Common myeloid progenitor, CD34-positive (primary cell): ENCODE measurements at regions of chr17 and their contacts with region 1.

Region 1: GRCh38 chr17:50783193-50783660 is 15.9 kb upstream of the ANKRD40CL start:
- DNase-seq: peak; percentile 85 to 92 (median 90)
- H3K4me3 ChIP-seq: no peak overlapping the region
- H3K27ac ChIP-seq: no peak overlapping the region
- H3K4me1 ChIP-seq: peaks cover 0 to 3% (median 3%) of the 10 kb centered on the region in 4 experiments
- H3K27me3 ChIP-seq: peaks cover 0 to 8% (median 0%) of the 10 kb centered on the region in 5 experiments

Region 2: DNA sequence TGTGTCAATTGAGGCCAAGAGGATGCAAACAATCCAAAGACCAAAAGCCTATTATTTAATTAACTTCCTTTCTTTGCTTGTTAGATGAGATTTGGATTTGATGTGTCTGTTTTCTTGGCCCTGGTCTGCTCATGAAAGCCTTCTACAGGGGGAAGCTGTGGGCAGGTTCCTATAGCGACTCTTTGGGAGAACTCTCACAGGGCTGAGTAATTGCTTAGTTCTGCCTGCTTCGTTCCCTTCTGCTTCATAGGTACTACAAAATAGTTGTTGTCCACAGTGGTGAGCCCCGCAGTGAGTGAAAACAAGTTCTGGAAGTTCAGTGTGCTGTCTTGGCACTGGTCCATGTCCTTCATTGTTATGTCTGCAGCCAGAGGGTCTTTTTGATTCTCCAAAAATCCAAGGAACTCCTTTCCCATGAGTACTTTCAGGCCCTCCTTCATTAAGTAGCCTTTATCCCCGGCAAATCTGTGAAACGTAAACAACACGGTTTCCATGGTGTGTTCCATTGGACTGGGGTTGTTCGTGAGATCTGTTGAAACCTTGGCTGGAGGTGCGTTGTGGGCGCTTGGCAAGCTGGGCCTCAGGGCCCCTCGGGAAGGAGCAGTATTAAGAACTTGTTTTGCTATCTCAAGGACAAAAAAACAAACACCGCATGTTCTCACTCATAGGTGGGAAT is 14.0 kb after region 1 on chr17:
- CTCF ChIA-PET with region 1: interaction called, 16 read pairs
- POLR2A ChIA-PET with region 1: no interaction called
- DNase-seq: peak in 2 of 3 donors; percentile 75
- H3K4me3 ChIP-seq: no peak overlapping the region
- H3K27ac ChIP-seq: no peak overlapping the region
- H3K4me1 ChIP-seq: peaks cover 0 to 14% (median 8%) of the 10 kb centered on the region in 4 experiments
- H3K27me3 ChIP-seq: no peaks in the 10 kb centered on the region

Region 3: DNA sequence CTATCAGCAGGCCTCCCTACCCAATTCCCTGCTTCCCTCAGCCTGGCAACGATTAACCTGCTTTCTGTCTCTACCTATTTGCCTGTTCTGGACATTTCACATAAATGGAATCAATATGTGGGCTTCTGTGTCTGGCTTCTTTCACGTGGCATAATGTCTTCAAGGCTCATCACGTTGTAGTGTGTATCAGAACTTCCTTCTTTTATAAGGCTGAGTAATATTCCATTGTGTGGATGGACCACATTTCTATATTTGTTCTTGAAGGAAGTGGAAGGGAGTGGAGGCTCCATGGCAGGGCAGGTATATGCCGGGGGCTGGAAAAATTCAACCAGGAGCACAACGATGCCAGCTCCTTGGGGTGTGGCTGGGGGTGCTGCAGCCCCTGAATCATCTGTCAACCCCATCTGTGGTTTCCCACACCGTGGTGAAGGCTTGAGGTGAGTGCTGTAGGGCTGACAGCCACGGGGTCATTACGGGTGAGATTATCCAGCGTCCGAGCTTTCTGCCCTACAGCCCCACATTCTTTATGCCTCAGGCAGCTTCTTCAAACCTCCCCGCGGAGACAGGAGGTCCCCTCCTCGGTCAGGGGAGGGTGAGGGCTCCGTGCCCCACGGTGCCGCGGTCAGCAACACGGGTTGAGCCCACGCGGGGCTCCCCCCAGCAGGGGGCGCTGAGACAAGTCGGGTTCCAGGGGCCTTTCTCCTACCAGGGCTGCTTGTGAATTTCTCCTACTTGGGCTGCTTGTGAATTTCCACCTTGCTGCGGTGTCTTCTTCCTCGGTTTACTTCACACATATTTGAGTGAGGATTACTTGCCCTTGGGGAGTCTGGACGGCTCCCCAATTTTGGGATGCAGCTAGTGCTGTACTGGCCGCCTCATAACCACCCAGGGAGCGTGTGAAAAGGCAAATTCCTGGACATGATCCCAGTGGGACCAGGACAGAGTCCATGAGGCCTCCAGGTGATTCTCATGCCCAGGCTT is 33.8 kb after region 1 on chr17:
- CTCF ChIA-PET with region 1: interaction called, 39 read pairs
- POLR2A ChIA-PET with region 1: no interaction called
- DNase-seq: peak; percentile 43 to 61 (median 51)
- H3K4me3 ChIP-seq: peak overlapping the region in 3 of 7 experiments; percentile 33 to 61 (median 44)
- H3K27ac ChIP-seq: no peak overlapping the region
- H3K4me1 ChIP-seq: peaks cover 0 to 11% (median 6%) of the 10 kb centered on the region in 4 experiments
- H3K27me3 ChIP-seq: no peaks in the 10 kb centered on the region

Region 4: DNA sequence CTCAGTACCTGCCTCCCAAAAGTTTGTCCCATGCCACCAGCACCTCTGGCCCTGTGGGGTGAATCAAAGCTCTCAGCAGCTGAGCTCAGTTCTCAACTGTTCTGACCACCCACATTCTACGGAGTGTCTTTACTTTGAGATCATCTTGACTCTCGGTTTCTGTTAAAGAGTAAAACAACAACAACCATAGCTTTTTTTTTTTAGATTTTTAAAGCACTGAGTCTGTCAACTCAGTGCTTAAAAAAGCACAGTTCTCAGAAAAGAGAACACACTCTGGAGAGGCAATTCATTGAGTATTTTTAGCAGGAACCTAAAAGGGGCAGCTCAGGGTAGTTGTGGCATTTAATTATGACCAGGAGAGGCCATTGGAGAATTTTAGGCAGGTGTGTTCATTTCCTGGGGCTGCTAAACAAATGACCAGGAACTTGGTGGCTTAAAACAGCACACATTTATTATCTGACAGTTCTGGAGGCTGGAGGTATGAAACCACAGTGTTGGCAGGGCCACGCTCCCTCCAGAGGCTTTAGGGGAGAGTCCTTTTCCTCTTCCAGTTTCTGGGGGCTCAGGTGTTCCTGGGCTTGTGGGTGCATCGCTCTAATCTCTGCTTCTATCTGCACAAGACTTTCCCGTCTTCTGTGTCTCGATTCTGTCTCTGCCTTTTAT is 45.4 kb after region 1 on chr17:
- CTCF ChIA-PET with region 1: interaction called, 37 read pairs
- POLR2A ChIA-PET with region 1: no interaction called
- DNase-seq: peak in 1 of 3 donors; percentile 26
- H3K4me3 ChIP-seq: peak overlapping the region in 3 of 7 experiments; percentile 24 to 26 (median 25)
- H3K27ac ChIP-seq: peak overlapping the region; percentile 17 to 47
- H3K4me1 ChIP-seq: peaks cover 0 to 45% (median 42%) of the 10 kb centered on the region in 4 experiments
- H3K27me3 ChIP-seq: no peaks in the 10 kb centered on the region

Region 5: DNA sequence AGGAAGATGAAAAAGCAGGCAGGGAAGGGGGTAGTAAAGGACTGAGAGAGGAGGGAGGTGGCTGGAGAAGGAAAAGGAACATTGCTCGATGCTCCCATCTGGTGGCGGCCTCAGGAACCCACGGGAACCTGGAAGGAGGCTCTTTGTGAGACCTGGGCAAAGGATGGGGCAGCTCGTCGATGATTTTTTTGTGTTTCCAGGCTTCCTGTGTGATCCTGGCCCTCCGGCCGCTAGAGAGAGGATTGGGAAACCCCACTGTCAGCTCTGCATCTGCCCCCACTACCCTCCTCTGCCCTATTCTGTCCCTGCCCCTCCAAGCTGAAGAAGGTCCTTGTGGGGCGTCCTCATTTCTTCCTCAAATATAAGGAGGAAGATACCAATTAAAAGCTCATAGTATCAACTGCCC is 58.7 kb after region 1 on chr17:
- CTCF ChIA-PET with region 1: interaction called, 172 read pairs
- POLR2A ChIA-PET with region 1: no interaction called
- DNase-seq: peak; percentile 55 to 78 (median 71)
- H3K4me3 ChIP-seq: no peak overlapping the region
- H3K27ac ChIP-seq: no peak overlapping the region
- H3K4me1 ChIP-seq: peaks cover 0 to 3% (median 0%) of the 10 kb centered on the region in 4 experiments
- H3K27me3 ChIP-seq: no peaks in the 10 kb centered on the region

Region 6: DNA sequence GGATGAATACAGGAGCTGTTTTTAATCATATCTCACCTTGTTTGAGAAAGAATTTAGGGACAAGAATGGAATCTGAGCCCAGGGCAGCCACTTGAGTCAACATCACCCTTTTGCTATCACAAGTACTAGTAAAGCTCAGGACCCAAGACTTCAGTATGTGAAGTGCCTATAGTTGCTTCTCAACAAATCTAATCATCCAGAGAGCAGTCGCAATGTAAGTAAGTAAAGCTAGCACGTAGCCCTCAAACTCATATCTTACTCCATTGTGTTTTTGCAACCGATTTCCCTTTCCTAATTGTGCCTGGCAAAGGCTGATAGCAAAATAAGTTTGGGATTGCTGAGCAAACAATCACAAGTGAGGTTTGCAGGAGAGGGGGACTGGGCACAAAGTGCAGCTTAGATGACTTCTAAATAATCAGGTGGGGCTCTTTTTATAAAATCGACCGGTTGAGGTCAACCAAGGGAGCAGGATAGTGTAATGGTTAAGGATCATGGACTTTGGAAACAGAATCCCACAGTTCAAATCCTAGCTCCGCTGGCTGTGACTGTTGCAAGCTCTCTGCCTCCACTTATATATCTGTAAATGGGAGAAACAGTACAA is 69.9 kb after region 1 on chr17:
- CTCF ChIA-PET with region 1: interaction called, 53 read pairs
- POLR2A ChIA-PET with region 1: no interaction called
- DNase-seq: no peak
- H3K4me3 ChIP-seq: no peak overlapping the region
- H3K27ac ChIP-seq: no peak overlapping the region
- H3K4me1 ChIP-seq: peaks cover 0 to 12% (median 3%) of the 10 kb centered on the region in 4 experiments
- H3K27me3 ChIP-seq: peaks cover 0 to 5% (median 0%) of the 10 kb centered on the region in 5 experiments

Region 7: GRCh38 chr17:50956750-50957523 is 173.7 kb after region 1 on chr17:
- CTCF ChIA-PET with region 1: interaction called, 15 read pairs
- POLR2A ChIA-PET with region 1: no interaction called
- DNase-seq: peak; percentile 51 to 64 (median 55)
- H3K4me3 ChIP-seq: no peak overlapping the region
- H3K27ac ChIP-seq: no peak overlapping the region
- H3K4me1 ChIP-seq: peaks cover 0 to 14% (median 7%) of the 10 kb centered on the region in 4 experiments
- H3K27me3 ChIP-seq: no peaks in the 10 kb centered on the region